ENCODE measurements at regions of chr1 and their contacts with region 1.

Region 1: GRCh38 chr1:227734856-227735538 is at the starts of genes JMJD4 and SNAP47:
- DNase-seq: peak; percentile 91 to 96
- ATAC-seq: peak; percentile 92 to 95 (median 94)
- H3K4me3 ChIP-seq: peak within 1 kb of the TSS; percentile 73
- H3K27ac ChIP-seq: peak within 1 kb of the TSS; percentile 80
- H3K4me1 ChIP-seq: peaks cover 29% of the 10 kb centered on the region
- H3K27me3 ChIP-seq: no peaks in the 10 kb centered on the region
- CTCF ChIP-seq: no peak
- total RNA-seq, gene JMJD4: 9.0 to 16.2 (median 14.3) TPM
- total RNA-seq, gene SNAP47: 19.6 to 40.5 (median 31.5) TPM

Region 2: DNA sequence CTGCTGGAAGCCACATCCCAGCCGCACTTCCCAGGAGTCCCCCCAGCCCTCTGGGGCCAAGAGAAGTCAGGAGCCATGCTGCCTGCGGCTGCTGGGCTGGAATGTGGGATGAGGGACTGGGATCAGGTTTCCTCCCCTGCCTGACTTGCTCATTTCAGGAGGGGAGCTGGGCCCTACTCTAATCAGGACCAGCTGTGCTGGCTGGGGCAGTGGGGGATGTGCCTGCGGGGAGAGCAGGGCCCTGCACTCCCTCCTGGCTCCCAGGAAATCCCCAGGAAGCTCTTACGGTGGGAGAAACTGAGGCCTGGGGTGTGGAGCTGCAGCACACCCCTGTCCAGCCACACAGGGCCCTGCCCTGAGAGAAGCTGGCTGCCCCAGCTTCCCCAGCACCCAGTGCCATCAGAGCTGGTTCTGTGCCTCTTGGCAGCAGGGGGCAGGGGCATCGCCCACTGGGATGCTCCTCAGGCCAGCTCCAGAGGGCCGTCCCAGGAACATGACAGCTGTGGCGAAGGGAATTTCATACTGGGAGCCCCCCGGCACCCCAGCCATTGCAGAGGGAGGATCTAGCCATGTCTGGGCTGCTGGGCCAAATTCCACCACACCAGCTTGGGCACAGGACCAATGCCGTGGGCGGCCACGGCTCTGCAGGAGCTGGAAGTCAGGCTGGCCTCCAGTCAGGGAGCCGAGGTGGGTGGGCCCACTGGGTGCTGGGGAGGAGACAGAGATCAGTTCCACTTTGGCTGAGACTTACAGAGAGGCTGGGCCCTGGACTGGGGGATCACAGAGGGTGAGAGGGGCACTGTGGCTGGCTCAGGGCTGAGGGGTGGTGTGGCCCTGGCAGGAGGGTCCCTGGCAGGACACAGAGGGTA is 59.2 kb after region 1 on chr1:
- intact Hi-C with region 1: loop called in 1 of 2 experiments (anchors 5 kb)
- DNase-seq: peak; percentile 67 to 73
- ATAC-seq: peak in 3 of 4 donors; percentile 4 to 45 (median 26)
- H3K4me3 ChIP-seq: no peak overlapping the region
- H3K27ac ChIP-seq: no peak overlapping the region
- H3K4me1 ChIP-seq: no peaks in the 10 kb centered on the region
- H3K27me3 ChIP-seq: peaks cover 0 to 2% (median 0%) of the 10 kb centered on the region in 3 donors
- CTCF ChIP-seq: no peak

Region 3: DNA sequence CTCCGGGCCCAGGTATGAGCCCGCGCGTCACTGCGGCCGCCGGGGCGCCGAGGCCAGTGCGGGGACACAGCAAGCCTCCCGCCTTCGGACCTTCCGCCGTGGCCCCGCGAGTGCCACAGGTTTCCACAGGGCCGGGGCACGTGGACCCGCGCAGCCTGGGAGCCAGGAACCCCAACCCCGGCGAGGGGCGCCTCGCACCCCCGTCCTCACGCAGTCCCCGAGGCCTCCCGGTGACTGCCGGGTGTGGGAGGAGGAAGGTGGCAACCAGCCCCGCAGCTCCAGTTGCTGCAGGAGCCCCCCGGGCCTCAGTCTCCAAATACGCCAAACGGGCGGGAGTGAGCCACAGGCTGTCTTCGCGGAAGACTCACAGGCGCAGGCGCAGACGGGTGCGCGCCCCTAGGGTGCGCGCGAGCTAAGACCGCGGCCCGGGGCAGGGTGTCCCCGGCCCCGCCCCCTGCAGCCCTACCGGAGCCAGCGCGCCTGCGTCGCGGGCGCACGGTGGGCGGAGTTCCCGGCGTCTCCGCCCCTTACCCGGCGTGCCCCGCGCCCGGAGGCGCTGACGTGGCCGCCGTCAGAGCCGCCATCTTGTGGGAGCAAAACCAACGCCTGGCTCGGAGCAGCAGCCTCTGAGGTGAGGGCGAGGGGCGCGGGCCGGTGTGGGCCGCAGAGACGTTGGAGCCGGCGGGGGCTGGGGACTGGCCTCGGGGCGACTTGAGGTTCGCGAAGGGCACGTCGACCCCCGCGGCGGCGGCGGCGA is 347.3 kb after region 1 on chr1 and contains the start of gene ARF1:
- intact Hi-C with region 1: loop called in 1 of 2 experiments (anchors 10 kb)
- DNase-seq: peak; percentile 91 to 96
- ATAC-seq: peak; percentile 90 to 95 (median 94)
- H3K4me3 ChIP-seq: peak within 1 kb of the TSS; percentile 99
- H3K27ac ChIP-seq: peak within 1 kb of the TSS; percentile 100
- H3K4me1 ChIP-seq: peaks cover 42% of the 10 kb centered on the region
- H3K27me3 ChIP-seq: no peaks in the 10 kb centered on the region
- CTCF ChIP-seq: no peak
- total RNA-seq, gene ARF1: 176 to 328 (median 256) TPM

Region 4: DNA sequence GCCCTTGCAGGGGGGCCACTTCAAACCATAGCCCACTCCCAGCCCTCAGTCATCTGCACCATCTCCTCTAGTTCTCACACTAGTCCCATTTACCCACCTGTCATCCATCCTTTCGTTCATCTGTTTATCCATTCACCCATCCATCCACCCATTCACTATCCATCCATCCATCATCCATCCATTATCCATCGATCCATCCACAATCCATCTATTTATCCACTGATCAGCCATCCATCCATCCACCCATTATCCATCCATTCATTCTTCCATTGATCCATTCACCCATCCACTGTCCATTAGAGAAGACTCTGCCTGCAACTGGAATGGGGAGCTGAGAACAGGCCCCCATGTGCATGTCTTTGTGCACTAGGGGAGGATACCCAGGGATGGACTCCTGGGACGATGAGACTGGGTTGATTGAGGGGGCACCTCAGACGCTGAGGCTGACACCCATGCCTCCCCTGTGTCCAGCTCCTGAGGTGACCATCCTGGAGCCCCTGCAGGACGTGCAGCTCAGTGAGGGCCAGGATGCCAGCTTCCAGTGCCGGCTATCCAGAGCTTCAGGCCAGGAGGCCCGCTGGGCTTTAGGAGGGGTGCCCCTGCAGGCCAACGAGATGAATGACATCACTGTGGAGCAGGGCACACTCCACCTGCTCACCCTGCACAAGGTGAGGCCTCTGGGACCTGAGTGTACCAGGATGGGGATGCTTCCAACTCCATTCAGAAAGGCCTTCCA is 573.8 kb after region 1 on chr1:
- intact Hi-C with region 1: no loop called
- DNase-seq: peak in 1 of 2 donors; percentile 53
- ATAC-seq: peak in 2 of 4 donors; percentile 0 to 2
- H3K4me3 ChIP-seq: no peak overlapping the region
- H3K27ac ChIP-seq: no peak overlapping the region
- H3K4me1 ChIP-seq: peaks cover 5% of the 10 kb centered on the region
- H3K27me3 ChIP-seq: no peaks in the 10 kb centered on the region
- CTCF ChIP-seq: no peak